ENCODE measurements at regions of chr1 and their contacts with region 1.

Region 1: GRCh38 chr1:229024528-229025130 is 246.3 kb upstream of the RAB4A start:
- H3K4me3 Mint-ChIP-seq: no peak overlapping the region
- H3K27ac Mint-ChIP-seq: peak overlapping the region; percentile 61
- H3K4me1 Mint-ChIP-seq: peaks cover 63% of the 10 kb centered on the region
- H3K27me3 Mint-ChIP-seq: peaks cover 2% of the 10 kb centered on the region

Region 2: GRCh38 chr1:228706305-228706704 is 318.3 kb before region 1 on chr1:
- intact Hi-C with region 1: no loop called
- H3K4me3 Mint-ChIP-seq: no peak overlapping the region
- H3K27ac Mint-ChIP-seq: no peak overlapping the region
- H3K4me1 Mint-ChIP-seq: no peaks in the 10 kb centered on the region
- H3K27me3 Mint-ChIP-seq: peaks cover 1% of the 10 kb centered on the region

Region 3: DNA sequence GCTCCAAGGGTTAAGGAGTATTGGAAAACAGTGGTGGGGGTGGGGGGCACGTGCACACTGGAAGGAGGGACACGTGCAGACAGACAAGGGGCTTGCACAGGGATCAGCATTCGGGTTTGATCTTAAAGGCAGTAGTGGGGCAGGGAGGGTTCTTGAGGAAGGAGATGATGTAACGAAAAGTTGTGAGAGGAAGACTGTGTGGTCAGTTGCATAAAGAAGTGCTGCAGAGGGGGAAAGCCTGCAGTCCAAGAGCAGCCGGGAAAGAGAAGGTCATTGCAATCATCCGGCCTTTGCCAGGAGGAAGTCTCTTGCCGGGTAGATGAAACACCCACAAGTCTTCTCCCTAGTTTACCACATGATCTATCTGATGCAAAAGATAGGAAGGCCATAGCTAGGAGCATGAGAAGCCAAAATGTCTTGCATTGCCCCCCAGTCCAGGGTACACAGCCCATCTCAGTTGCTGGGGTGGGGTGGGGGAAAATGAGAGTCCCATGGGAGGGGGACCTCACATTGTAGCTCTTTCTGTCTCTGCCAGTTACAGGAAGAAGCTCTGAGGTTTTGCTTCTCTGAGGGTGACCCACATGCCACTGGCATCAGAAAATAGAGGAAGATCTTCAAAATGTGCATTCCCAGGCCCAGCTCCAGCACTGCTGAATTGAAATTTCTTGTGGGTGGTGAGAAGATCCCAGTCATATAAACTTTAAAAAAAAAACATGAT is 43.8 kb after region 1 on chr1:
- intact Hi-C with region 1: loop called (anchors 5 kb)
- H3K4me3 Mint-ChIP-seq: peak overlapping the region; percentile 40
- H3K27ac Mint-ChIP-seq: peak overlapping the region; percentile 80
- H3K4me1 Mint-ChIP-seq: peaks cover 71% of the 10 kb centered on the region
- H3K27me3 Mint-ChIP-seq: peaks cover 7% of the 10 kb centered on the region

Region 4: GRCh38 chr1:229537894-229538293 is 513.3 kb after region 1 on chr1:
- intact Hi-C with region 1: no loop called
- H3K4me3 Mint-ChIP-seq: no peak overlapping the region
- H3K27ac Mint-ChIP-seq: no peak overlapping the region
- H3K4me1 Mint-ChIP-seq: peaks cover 6% of the 10 kb centered on the region
- H3K27me3 Mint-ChIP-seq: no peaks in the 10 kb centered on the region

Measured in dendritic cell treated with granulocyte-macrophage colony-stimulating factor and Interleukin-4, amounts not matched to agents 40 ng/mL and 50 ng/mL, for 4 days (primary cell).